Upper lobe of right lung (tissue), 1 donor: ENCODE measurements at regions of chr16 and their contacts with region 1.

Region 1: DNA sequence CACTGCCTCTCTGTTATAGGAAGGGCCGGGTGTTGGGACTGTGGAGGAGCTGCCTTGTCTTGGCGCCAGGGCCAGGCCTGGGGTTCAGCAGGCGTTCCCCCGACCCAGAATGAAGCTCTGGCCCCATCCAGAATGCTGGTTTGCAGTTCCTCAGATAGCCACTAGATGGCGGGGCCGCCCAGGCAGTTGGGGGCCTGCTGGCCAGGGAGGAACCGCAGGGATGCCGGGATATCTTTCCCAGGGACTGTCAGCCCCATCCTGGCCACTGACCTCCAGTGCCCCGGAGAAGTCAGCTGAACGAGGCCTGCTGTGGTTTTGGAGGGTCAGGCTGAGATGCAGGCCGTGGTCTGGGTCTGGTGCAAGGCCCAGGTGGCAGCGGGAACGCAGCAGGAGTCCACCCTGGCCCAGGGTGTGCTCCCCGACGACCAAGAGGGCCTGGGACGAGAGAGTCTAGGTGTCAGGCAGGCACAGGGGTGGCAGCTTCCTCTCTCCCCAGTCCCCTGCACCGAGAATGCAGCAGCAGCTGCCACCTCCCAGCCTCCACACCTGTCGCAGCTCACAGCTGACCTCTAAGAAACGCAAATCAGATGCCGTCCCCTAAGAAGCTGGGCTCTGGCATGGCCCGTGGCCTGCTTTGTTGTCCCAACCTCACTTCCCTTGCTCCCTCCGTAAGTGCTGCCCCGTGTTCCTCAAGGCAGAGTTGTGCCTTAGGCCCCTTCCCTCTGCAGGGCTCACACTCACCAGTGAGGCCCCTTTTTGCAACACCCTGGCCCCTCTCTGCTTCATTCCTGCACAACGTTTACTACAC is 51.2 kb downstream of the RMI2 start:
- DNase-seq: peak; percentile 80
- ATAC-seq: peak; percentile 81
- H3K4me3 ChIP-seq: no peak overlapping the region
- H3K27ac ChIP-seq: no peak overlapping the region
- H3K4me1 ChIP-seq: no peaks in the 10 kb centered on the region
- H3K27me3 ChIP-seq: no peaks in the 10 kb centered on the region
- CTCF ChIP-seq: peak; percentile 99

Region 2: GRCh38 chr16:11315510-11315909 is 80.9 kb before region 1 on chr16:
- intact Hi-C with region 1: no loop called
- DNase-seq: no peak
- ATAC-seq: no peak
- H3K4me3 ChIP-seq: no peak overlapping the region
- H3K27ac ChIP-seq: no peak overlapping the region
- H3K4me1 ChIP-seq: peaks cover 12% of the 10 kb centered on the region
- H3K27me3 ChIP-seq: no peaks in the 10 kb centered on the region
- CTCF ChIP-seq: no peak

Region 3: DNA sequence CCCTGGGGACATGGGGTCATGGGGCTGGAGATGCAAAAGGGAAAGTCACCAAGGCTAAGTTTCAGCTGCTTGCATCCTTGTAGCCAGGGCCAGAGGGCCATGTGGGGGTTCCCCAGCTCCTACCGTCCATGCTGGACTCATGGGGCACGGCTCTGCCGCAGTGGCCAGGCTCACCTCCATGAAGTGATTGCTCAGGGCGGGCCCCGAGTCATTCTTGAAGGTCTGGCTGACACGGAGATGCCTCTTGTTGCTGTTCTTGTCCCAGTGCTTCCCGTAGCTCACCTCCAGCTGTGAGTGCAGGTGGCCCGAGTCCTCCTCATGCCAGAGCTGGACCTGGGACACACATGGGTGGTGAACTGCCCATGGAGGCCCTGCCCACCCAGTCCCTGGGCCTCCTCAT is 63.3 kb after region 1 on chr16:
- intact Hi-C with region 1: no loop called
- DNase-seq: no peak
- ATAC-seq: peak; percentile 17
- H3K4me3 ChIP-seq: no peak overlapping the region
- H3K27ac ChIP-seq: no peak overlapping the region
- H3K4me1 ChIP-seq: peaks cover 3% of the 10 kb centered on the region
- H3K27me3 ChIP-seq: no peaks in the 10 kb centered on the region
- CTCF ChIP-seq: no peak

Region 4: DNA sequence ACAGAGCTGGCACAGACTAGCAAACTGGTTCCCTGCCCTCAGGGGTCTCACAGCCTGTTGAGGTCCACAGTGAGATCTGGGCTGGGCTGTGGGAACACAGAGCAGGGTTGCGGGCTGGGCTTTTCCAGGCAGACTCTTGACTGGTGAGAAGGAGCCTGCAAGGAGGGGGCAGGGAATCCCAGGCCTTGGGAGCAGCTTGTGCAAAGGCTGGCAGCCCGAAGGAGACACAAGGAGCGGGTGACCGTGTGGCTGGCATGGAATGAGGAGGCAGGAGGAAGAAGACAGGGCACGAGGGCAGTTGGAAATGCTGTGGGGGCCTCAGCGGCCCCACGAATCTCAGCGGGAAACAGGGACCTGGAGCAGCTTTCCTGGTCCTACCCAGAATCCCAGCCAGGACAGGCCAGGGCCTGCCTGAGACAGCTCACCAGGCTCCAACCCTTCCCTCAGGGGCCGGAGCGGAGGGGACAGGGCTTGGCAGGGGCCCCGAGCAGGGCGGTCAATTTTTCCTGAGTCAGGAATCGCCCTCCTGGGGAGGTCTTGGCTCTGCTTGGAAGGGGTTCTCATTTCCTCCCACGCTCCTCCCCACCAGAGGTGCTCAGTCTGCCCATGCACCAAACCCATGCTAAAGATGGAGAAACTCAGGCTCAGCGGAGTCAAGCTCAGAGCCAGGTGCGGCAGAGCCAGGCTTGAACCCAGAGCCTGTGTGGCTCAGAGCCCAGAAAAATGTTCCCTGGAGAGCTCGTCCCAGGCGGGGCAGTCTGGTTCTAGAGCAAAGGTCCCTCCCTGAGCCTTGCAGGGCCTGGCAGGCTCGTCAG is 262.7 kb after region 1 on chr16:
- intact Hi-C with region 1: loop called (anchors 10 kb)
- DNase-seq: no peak
- ATAC-seq: peak; percentile 56
- H3K4me3 ChIP-seq: no peak overlapping the region
- H3K27ac ChIP-seq: no peak overlapping the region
- H3K4me1 ChIP-seq: no peaks in the 10 kb centered on the region
- H3K27me3 ChIP-seq: no peaks in the 10 kb centered on the region
- CTCF ChIP-seq: no peak

Region 5: DNA sequence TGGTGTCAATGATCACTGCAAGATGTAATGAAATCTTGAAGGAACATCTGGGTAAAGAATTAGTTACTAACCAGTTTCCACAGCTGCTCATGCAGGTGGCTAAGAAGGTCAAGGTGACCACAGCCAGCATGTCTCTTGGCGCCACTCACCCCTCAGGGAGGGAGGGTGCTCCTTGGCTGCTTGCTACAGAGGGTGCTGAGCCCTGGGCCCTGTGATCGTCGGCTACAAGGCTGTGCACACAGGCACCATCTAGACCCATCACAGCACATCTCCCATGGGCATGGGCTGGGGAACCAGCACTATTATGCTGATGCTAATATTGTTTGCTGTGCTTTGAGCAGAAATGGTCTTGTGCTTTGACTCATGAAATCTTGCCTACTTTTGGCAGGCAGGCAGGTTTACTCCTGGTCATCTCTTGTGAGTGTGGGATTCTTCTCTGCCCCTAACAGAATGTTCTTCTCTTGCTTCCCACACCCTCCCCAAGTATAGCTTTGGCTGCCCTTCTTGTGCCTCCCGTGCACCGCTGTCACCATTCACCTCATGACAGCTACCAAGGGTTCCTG is 309.8 kb after region 1 on chr16:
- intact Hi-C with region 1: loop called (anchors 10 kb)
- DNase-seq: no peak
- ATAC-seq: peak; percentile 28
- H3K4me3 ChIP-seq: no peak overlapping the region
- H3K27ac ChIP-seq: no peak overlapping the region
- H3K4me1 ChIP-seq: peaks cover 12% of the 10 kb centered on the region
- H3K27me3 ChIP-seq: no peaks in the 10 kb centered on the region
- CTCF ChIP-seq: no peak